Naive thymus-derived CD4-positive, alpha-beta T cell (primary cell): ENCODE measurements at regions of chr12 and their contacts with region 1.

Region 1: GRCh38 chr12:123365025-123365917 is 624 bp upstream of the SBNO1 start:
- DNase-seq: peak; percentile 91 to 99 (median 98)
- ATAC-seq: peak; percentile 85
- H3K4me3 ChIP-seq: peak overlapping the region; percentile 97
- H3K4me3 Mint-ChIP-seq: peak overlapping the region; percentile 89 to 98 (median 95)
- H3K27ac ChIP-seq: peak overlapping the region; percentile 86
- H3K27ac Mint-ChIP-seq: peak overlapping the region; percentile 93 to 99 (median 95)
- H3K4me1 ChIP-seq: peaks cover 14 to 16% of the 10 kb centered on the region in 2 donors
- H3K4me1 Mint-ChIP-seq: peaks cover 11 to 29% (median 16%) of the 10 kb centered on the region in 7 donors
- H3K27me3 ChIP-seq: no peaks in the 10 kb centered on the region
- H3K27me3 Mint-ChIP-seq: no peaks in the 10 kb centered on the region

Region 2: DNA sequence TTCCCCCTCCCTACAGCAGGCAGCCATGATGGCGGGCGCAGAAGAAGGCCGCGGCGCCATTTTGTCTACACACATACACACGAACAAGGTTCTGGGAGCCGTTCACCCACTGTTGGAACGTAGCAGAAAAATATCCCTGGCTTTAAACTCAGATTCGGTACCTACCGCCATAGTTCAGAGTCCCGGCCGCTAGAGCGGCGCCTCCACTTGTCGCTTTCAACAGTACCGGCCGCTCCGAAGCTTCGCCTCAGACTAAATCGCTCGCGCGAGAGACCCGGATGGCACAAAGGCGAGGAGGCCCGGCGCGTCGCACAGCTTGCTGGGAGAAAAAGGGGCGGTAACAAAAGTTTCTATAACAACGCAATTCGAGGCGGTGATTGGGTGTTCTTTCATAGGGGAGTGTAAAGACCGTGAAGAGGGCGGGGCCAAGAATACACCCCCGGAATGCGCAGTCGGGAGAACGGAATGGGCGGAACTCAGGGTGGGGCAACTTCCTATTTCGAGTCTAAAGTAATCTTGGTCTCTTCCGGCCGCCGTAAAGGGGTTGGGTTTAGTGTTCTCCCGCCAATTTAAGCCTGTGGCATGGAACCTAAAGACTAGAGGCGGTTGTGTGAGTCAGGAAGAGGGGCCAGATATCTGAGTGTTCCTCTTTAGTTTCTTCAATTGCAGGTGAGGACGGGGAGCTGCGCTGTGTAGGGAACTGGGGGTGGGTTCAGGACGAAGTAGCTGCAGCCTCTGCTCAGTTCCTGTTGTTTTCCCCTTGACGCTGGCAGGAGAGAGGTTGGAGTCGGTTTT is 838.4 kb before region 1 on chr12 and contains the starts of genes KNTC1 and RSRC2:
- CTCF ChIA-PET with region 1: no interaction called
- POLR2A ChIA-PET with region 1: interaction called, 3 read pairs
- intact Hi-C with region 1: loop called in 1 of 2 experiments (anchors 2 kb)
- DNase-seq: peak; percentile 87 to 99 (median 99)
- ATAC-seq: peak; percentile 96
- H3K4me3 ChIP-seq: peak within 1 kb of the TSS; percentile 86
- H3K4me3 Mint-ChIP-seq: no peak within 1 kb of the TSS
- H3K27ac ChIP-seq: peak within 1 kb of the TSS; percentile 94
- H3K27ac Mint-ChIP-seq: peak within 1 kb of the TSS in 1 of 9 donors; percentile 68
- H3K4me1 ChIP-seq: peaks cover 30 to 37% of the 10 kb centered on the region in 2 donors
- H3K4me1 Mint-ChIP-seq: peaks cover 24 to 41% (median 36%) of the 10 kb centered on the region in 7 donors
- H3K27me3 ChIP-seq: no peaks in the 10 kb centered on the region
- H3K27me3 Mint-ChIP-seq: no peaks in the 10 kb centered on the region
- total RNA-seq, gene KNTC1: 24.5 to 102 (median 31.0) TPM
- total RNA-seq, gene RSRC2: 89.7 to 249 (median 139) TPM

Region 3: DNA sequence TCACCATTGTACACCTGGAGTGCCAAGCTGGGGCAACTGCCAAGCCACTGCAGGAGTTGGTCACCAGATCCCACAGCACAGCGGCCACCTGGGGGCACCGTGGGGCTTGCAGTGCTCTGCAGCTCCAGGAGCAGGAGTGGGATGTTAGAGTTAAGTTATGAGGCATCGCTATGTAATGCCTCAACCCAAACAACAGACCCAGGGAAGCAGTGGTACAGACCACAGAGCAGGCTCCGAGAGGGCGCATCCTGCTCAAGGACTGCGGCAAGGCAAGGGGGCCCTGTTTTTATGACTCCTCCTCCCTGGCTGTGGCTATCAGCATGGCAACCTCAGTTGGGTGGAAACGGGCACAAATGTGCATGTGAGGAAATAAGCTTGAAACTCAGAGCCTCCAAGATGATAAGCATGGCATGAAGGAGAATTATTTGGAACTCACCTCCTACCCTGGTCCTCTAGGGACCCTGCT is 321.7 kb before region 1 on chr12:
- CTCF ChIA-PET with region 1: no interaction called
- POLR2A ChIA-PET with region 1: interaction called, 3 read pairs
- intact Hi-C with region 1: loop called in 1 of 2 experiments (anchors 2 kb)
- DNase-seq: peak; percentile 36 to 83 (median 71)
- ATAC-seq: peak; percentile 92
- H3K4me3 ChIP-seq: no peak overlapping the region
- H3K4me3 Mint-ChIP-seq: peak overlapping the region in 9 of 10 donors; percentile 13 to 69 (median 56)
- H3K27ac ChIP-seq: peak overlapping the region; percentile 38
- H3K27ac Mint-ChIP-seq: peak overlapping the region; percentile 40 to 95 (median 84)
- H3K4me1 ChIP-seq: peaks cover 10 to 17% of the 10 kb centered on the region in 2 donors
- H3K4me1 Mint-ChIP-seq: peaks cover 27 to 65% (median 52%) of the 10 kb centered on the region in 7 donors
- H3K27me3 ChIP-seq: no peaks in the 10 kb centered on the region
- H3K27me3 Mint-ChIP-seq: no peaks in the 10 kb centered on the region

Region 4: DNA sequence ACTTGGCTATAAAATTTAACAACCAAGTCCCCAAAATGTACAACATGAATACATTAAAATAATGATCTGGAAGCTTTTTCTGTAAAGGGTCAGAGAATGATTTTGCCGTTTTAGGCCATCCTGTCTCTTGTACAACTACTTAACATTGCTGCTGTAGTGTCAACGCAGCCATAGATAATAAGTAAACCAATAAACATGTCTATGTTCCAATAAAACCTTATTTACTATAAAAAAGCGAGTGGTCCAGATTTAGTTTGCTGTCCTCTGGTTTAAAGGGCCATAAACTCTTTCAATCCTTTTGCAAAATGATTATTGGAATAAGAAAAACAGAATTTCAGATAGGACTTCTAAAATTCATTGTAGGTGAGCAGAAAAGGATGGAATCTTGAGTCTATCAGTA is 29.8 kb before region 1 on chr12:
- CTCF ChIA-PET with region 1: no interaction called
- POLR2A ChIA-PET with region 1: no interaction called
- intact Hi-C with region 1: loop called in 1 of 2 experiments (anchors 2 kb)
- DNase-seq: no peak
- ATAC-seq: no peak
- H3K4me3 ChIP-seq: no peak overlapping the region
- H3K4me3 Mint-ChIP-seq: no peak overlapping the region
- H3K27ac ChIP-seq: no peak overlapping the region
- H3K27ac Mint-ChIP-seq: no peak overlapping the region
- H3K4me1 ChIP-seq: no peaks in the 10 kb centered on the region
- H3K4me1 Mint-ChIP-seq: peaks cover 10 to 22% (median 14%) of the 10 kb centered on the region in 7 donors
- H3K27me3 ChIP-seq: no peaks in the 10 kb centered on the region
- H3K27me3 Mint-ChIP-seq: no peaks in the 10 kb centered on the region

Region 5: DNA sequence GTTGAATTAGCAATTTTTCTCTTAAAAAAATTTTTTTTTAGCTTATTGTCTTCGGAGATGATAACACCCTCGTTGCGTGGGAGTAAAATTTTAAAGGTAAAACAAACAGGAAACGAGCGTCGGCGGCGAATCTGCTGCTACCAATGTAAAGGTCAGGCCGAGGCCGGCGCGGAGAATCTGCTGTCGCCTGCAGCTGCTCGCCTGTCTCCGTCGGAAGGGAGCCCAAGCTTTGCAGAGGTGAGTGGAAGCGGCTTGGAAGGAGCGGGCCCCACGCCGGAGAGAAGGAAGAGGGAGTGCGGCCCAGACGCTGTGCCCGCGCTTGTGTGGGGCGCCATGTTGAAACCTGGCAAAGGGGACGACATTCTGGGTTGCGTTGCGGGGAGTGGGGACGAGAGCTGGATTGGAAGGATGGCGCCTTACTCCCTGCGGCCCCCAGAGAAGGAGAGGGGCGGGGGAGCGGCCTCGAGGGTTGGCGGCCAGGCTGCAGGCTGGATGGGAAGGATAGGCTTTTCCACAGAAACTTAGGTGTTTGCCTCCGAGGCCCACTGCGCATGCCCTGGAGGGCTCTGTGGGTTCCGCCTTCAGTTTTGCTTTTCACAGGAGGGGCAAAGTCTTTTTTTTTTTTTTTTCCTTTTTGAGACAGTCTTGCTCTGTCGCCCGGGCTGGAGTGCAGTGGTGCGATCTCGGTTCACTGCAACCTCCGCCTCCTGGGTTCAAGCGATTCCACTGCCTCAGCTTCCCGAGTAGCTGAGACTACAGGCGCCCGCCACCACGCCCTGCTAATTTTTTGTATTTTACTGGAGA is 92.9 kb after region 1 on chr12 and contains the start of gene SNRNP35:
- CTCF ChIA-PET with region 1: interaction called, 3 read pairs
- POLR2A ChIA-PET with region 1: interaction called, 21 read pairs
- intact Hi-C with region 1: loop called (anchors 1 kb)
- DNase-seq: peak; percentile 79 to 92 (median 88)
- ATAC-seq: peak; percentile 85
- H3K4me3 ChIP-seq: peak within 1 kb of the TSS; percentile 97
- H3K4me3 Mint-ChIP-seq: peak within 1 kb of the TSS; percentile 92 to 100 (median 99)
- H3K27ac ChIP-seq: peak within 1 kb of the TSS; percentile 99
- H3K27ac Mint-ChIP-seq: peak within 1 kb of the TSS; percentile 100
- H3K4me1 ChIP-seq: peaks cover 14 to 18% of the 10 kb centered on the region in 2 donors
- H3K4me1 Mint-ChIP-seq: peaks cover 21 to 45% (median 26%) of the 10 kb centered on the region in 7 donors
- H3K27me3 ChIP-seq: no peaks in the 10 kb centered on the region
- H3K27me3 Mint-ChIP-seq: no peaks in the 10 kb centered on the region
- total RNA-seq, gene SNRNP35: 30.2 to 53.4 (median 35.8) TPM

Region 6: DNA sequence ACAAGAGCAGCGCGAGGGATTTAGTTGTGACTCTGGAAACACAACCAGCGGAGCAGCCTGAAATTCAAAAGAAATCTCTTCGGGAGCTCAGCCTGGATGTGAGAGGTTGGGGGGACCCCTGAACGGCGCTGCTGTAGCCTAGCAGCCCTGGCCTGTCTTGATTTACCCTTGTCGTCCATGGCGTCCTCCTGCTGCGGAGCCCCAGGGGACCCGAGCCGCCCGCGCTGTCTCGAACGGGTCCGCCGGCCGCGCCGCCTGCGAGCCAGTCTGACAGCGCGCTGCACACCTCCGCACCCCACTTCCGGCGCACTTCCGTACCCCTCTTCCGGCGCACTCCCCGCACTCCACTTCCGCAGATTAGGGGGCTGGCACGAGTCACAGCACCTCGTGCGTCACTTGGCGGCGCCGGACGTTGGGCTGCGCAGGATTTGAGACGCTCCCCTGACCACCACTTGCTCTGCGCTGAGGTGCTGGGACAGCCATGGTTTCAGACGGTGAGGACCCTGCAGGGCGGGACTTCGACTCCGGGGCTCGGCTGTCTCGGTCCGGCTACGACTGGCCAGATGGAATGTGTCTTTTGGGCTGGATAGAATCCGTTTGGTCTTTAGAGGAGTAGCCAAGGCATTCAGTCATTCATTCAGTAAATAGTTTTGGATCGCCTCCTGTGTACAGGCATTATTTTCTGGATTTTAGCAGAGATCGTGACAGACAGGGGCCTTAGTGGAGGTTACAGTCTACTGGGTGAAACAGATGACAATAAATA is 268.3 kb after region 1 on chr12 and contains the starts of genes EIF2B1 and GTF2H3:
- CTCF ChIA-PET with region 1: no interaction called
- POLR2A ChIA-PET with region 1: interaction called, 5 read pairs
- intact Hi-C with region 1: loop called in 1 of 2 experiments (anchors 1 kb)
- DNase-seq: peak; percentile 83 to 96 (median 94)
- ATAC-seq: peak; percentile 98
- H3K4me3 ChIP-seq: peak within 1 kb of the TSS; percentile 85
- H3K4me3 Mint-ChIP-seq: peak within 1 kb of the TSS; percentile 89 to 100 (median 96)
- H3K27ac ChIP-seq: peak within 1 kb of the TSS; percentile 91
- H3K27ac Mint-ChIP-seq: peak within 1 kb of the TSS; percentile 91 to 99 (median 96)
- H3K4me1 ChIP-seq: peaks cover 11 to 16% of the 10 kb centered on the region in 2 donors
- H3K4me1 Mint-ChIP-seq: peaks cover 21 to 54% (median 43%) of the 10 kb centered on the region in 7 donors
- H3K27me3 ChIP-seq: no peaks in the 10 kb centered on the region
- H3K27me3 Mint-ChIP-seq: no peaks in the 10 kb centered on the region
- total RNA-seq, gene EIF2B1: 44.0 to 64.3 (median 49.5) TPM
- total RNA-seq, gene GTF2H3: 21.4 to 39.7 (median 27.7) TPM